Aorta (tissue), 5 donors: ENCODE measurements at regions of chr6 and their contacts with region 1.

Region 1: DNA sequence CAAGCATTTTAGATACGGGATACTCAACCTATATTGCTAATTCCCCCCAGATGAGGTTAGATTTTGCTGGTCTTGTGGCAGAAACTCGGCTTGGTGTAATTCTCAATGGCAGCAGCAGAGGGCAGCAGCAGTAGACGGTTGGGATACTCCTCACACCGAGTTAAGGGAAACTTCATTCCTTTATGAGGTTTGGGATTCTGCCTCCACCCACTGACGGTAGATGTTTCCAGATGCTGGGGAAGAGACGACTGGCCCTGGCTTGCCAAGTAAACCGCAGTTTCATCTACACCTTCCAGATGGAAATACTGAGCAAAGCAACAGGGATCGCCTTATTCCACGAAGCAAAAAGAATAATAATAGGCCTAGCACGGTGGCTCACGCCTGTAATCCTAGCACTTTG is 8.2 kb upstream of the TBC1D7 start:
- DNase-seq: peak in 1 of 2 donors; percentile 94
- ATAC-seq: peak; percentile 88
- H3K4me3 ChIP-seq: no peak overlapping the region
- H3K27ac ChIP-seq: no peak overlapping the region
- H3K4me1 ChIP-seq: no peaks in the 10 kb centered on the region
- H3K27me3 ChIP-seq: no peaks in the 10 kb centered on the region

Region 2: GRCh38 chr6:12637960-12638641 is 698.5 kb before region 1 on chr6:
- intact Hi-C with region 1: loop called in 1 of 2 experiments (anchors 10 kb)
- DNase-seq: peak; percentile 56 to 76
- ATAC-seq: no peak
- H3K4me3 ChIP-seq: no peak overlapping the region
- H3K27ac ChIP-seq: no peak overlapping the region
- H3K4me1 ChIP-seq: no peaks in the 10 kb centered on the region
- H3K27me3 ChIP-seq: no peaks in the 10 kb centered on the region

Region 3: GRCh38 chr6:13203145-13203544 is 133.4 kb before region 1 on chr6:
- intact Hi-C with region 1: no loop called
- DNase-seq: no peak
- ATAC-seq: no peak
- H3K4me3 ChIP-seq: no peak overlapping the region
- H3K27ac ChIP-seq: no peak overlapping the region
- H3K4me1 ChIP-seq: no peaks in the 10 kb centered on the region
- H3K27me3 ChIP-seq: no peaks in the 10 kb centered on the region

Region 4: GRCh38 chr6:13538084-13538483 is 201.5 kb after region 1 on chr6:
- intact Hi-C with region 1: loop called (anchors 5 kb)
- DNase-seq: no peak
- ATAC-seq: no peak
- H3K4me3 ChIP-seq: no peak overlapping the region
- H3K27ac ChIP-seq: no peak overlapping the region
- H3K4me1 ChIP-seq: no peaks in the 10 kb centered on the region
- H3K27me3 ChIP-seq: no peaks in the 10 kb centered on the region